Activated CD4-positive, alpha-beta memory T cell treated with anti-CD3 and anti-CD28 coated beads for 36 hours (primary cell): ENCODE measurements at regions of chr5 and their contacts with region 1.

Region 1: DNA sequence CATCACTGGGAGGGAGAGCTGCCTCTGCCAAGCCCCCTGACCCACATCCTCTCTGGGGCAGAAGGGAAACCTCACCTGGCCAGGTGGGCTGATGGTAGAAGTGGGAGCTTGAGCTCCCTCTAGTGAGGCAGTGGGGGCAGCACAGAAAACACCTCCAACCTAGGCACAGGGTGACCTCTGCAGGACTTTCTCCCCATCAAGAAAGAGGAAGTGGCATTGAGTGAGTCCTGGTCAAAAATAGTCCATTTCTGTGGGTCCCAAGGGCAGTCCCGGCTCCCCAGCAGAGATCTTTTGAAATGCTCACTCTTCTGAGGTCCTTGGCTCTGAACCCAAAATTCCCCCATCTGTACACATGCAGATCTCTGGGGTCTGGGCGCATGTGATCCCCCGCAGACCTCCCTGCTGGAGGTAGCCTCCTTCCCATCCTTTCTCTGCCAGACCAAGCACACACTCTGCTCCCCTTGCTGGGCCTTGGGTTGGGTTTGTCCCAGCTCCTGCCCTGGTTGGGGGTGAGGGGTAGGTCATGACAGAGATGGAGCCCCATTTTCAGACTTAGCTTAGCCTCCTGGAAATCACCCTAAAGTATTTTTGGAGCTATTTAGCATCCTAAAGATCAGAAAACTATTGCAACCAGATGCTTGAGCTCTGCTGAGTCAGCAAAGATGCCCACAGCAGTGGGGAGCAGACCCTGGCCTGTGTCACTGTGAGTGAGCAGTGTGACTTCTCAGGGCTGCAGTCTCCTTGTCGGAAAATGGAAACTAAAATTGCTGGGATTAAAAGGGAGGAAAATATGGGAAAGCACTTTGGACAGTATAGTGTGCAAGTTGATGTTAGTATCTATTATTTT is 41.6 kb upstream of the LCP2 start:
- DNase-seq: peak; percentile 80
- H3K4me3 Mint-ChIP-seq: no peak overlapping the region
- H3K27ac Mint-ChIP-seq: peak overlapping the region; percentile 42
- H3K4me1 Mint-ChIP-seq: peaks cover 42% of the 10 kb centered on the region
- H3K27me3 Mint-ChIP-seq: no peaks in the 10 kb centered on the region

Region 2: GRCh38 chr5:169904059-169904458 is 435.1 kb before region 1 on chr5:
- CTCF ChIA-PET with region 1: no interaction called
- POLR2A ChIA-PET with region 1: no interaction called
- intact Hi-C with region 1: no loop called
- DNase-seq: no peak
- H3K4me3 Mint-ChIP-seq: no peak overlapping the region
- H3K27ac Mint-ChIP-seq: no peak overlapping the region
- H3K4me1 Mint-ChIP-seq: peaks cover 10% of the 10 kb centered on the region
- H3K27me3 Mint-ChIP-seq: no peaks in the 10 kb centered on the region

Region 3: GRCh38 chr5:170225326-170226128 is 113.6 kb before region 1 on chr5:
- CTCF ChIA-PET with region 1: interaction called, 221 read pairs
- POLR2A ChIA-PET with region 1: no interaction called
- intact Hi-C with region 1: loop called (anchors 1 kb)
- DNase-seq: peak; percentile 81
- H3K4me3 Mint-ChIP-seq: no peak overlapping the region
- H3K27ac Mint-ChIP-seq: no peak overlapping the region
- H3K4me1 Mint-ChIP-seq: peaks cover 3% of the 10 kb centered on the region
- H3K27me3 Mint-ChIP-seq: no peaks in the 10 kb centered on the region

Region 4: GRCh38 chr5:170253844-170254455 is 85.2 kb before region 1 on chr5:
- CTCF ChIA-PET with region 1: interaction called, 15 read pairs
- POLR2A ChIA-PET with region 1: no interaction called
- intact Hi-C with region 1: no loop called
- DNase-seq: peak; percentile 80
- H3K4me3 Mint-ChIP-seq: no peak overlapping the region
- H3K27ac Mint-ChIP-seq: peak overlapping the region; percentile 73
- H3K4me1 Mint-ChIP-seq: peaks cover 57% of the 10 kb centered on the region
- H3K27me3 Mint-ChIP-seq: no peaks in the 10 kb centered on the region

Region 5: DNA sequence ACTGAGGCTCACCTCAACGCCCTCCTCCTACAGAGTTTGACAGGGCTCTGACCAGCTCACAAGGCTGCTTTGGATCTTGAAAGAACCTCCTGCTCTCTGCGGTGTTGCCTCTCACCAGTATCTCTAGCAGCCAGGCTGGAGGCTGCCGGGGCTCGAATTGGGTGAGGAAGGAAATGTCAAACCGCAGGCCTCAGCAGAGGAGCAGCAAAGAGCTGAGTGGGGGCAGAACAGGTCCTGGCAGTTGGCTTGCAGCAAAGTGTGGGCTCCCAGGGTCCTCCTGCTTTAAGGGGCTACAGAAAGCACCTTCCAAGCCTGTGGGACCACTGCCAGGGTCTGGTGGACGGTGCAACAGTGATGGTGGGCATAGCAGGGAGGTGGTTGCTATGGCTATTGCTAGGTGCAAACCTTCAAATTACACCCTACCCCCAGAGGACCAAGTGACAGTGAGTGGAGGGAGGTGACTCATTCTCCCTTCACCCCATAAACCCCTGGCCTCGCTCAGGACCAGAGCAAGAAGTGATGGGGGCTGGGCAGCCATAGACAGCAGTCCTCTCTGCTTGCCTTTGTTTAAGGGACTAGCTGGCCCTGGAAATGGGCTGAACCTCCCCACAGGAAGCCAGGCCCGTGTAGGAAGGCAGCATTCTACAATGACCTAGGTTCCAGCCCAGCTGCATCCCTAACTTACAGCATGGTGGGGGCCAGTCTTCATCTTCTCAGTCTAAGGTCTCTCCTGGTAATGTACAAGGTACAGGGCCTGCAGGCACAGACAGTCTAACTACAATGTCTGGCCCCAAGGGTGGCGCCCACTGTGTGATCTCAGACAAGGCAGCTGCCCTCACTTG is 60.3 kb before region 1 on chr5:
- CTCF ChIA-PET with region 1: interaction called, 290 read pairs
- POLR2A ChIA-PET with region 1: interaction called, 36 read pairs
- intact Hi-C with region 1: loop called (anchors 1 kb)
- DNase-seq: peak; percentile 93
- H3K4me3 Mint-ChIP-seq: peak overlapping the region; percentile 40
- H3K27ac Mint-ChIP-seq: peak overlapping the region; percentile 95
- H3K4me1 Mint-ChIP-seq: peaks cover 94% of the 10 kb centered on the region
- H3K27me3 Mint-ChIP-seq: no peaks in the 10 kb centered on the region

Region 6: GRCh38 chr5:170312666-170313065 is 26.5 kb before region 1 on chr5:
- CTCF ChIA-PET with region 1: interaction called, 24 read pairs
- POLR2A ChIA-PET with region 1: interaction called, 21 read pairs
- intact Hi-C with region 1: no loop called
- DNase-seq: peak; percentile 88
- H3K4me3 Mint-ChIP-seq: peak overlapping the region; percentile 79
- H3K27ac Mint-ChIP-seq: peak overlapping the region; percentile 95
- H3K4me1 Mint-ChIP-seq: peaks cover 51% of the 10 kb centered on the region
- H3K27me3 Mint-ChIP-seq: no peaks in the 10 kb centered on the region